Psoas muscle (tissue), 8 donors: ENCODE measurements at regions of chr15 and their contacts with region 1.

Region 1: DNA sequence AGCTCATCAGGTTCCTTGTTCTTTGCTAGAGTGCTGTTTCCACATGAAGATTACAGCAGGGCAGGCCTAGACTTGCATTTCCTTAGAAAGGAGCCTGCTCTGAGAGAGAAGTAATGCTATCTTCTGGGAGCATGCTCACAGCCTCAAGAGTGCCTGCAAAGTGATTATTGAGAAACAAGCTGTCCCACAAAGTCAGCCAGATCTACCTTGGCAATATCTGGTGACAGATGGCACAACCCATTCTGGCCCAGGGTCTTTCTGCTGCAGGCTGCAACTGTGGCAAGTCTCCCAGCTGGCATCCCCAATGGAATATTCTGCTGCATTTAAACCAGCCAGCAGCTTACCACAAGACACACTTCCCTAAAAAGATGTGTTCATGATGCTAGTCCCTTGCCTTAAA is 29.3 kb downstream of the MTMR10 start:
- DNase-seq: peak in 1 of 2 donors; percentile 75
- ATAC-seq: peak; percentile 80 to 84 (median 81)
- H3K4me3 ChIP-seq: no peak overlapping the region
- H3K27ac ChIP-seq: peak overlapping the region; percentile 94
- H3K4me1 ChIP-seq: peaks cover 24% of the 10 kb centered on the region
- H3K27me3 ChIP-seq: no peaks in the 10 kb centered on the region
- CTCF ChIP-seq: no peak

Region 2: GRCh38 chr15:30903497-30904201 is 58.4 kb before region 1 on chr15 and contains the start of gene FAN1:
- intact Hi-C with region 1: loop called in 1 of 2 experiments (anchors 5 kb)
- DNase-seq: peak; percentile 79 to 92
- ATAC-seq: peak; percentile 98 to 99 (median 98)
- H3K4me3 ChIP-seq: peak within 1 kb of the TSS; percentile 86
- H3K27ac ChIP-seq: peak within 1 kb of the TSS; percentile 89
- H3K4me1 ChIP-seq: peaks cover 27% of the 10 kb centered on the region
- H3K27me3 ChIP-seq: no peaks in the 10 kb centered on the region
- CTCF ChIP-seq: no peak
- total RNA-seq, gene FAN1: 13.5 to 27.5 (median 25.2) TPM

Region 3: DNA sequence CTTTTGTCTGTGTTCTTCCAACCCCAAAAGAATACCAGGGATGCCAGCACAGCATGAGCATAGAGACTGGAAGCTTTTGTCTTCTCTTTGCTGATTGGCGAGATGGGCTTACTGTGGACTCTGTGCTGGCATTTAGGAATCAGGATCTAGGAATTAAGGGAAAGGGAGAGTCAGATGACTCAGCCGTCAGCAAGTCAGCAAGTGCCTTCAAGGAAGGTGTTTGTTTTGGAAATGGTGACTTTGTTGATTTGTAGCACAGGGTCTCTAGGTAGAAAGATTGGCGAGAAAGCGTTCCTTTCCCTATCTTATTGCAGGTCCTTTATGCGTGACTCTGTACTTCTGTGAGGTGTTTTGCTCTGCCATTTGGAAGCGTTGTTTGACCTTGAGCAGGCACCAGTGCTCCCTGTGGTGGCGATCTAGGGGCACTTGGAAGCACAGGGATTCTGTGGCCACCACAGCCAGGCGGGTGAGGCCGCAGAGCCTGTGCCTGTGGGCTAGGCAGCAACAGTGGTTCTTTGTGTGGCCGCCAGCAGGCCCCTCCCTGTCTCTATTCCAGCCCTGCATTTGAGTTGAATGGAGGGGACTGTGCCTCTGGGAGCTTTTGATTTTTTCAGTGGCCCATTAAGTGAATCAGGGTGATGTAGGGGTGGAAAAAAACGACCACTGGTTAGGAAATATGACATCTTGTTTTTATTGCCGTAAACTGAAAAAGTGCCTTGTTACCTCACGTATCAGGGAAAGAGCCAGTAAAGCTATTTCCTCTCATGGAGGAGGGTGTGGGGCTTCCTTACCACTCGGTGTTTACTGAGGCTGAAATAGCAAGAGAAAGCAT is 39.4 kb before region 1 on chr15:
- intact Hi-C with region 1: loop called in 1 of 2 experiments (anchors 5 kb)
- DNase-seq: no peak
- ATAC-seq: peak; percentile 30 to 43 (median 36)
- H3K4me3 ChIP-seq: no peak overlapping the region
- H3K27ac ChIP-seq: peak overlapping the region; percentile 72
- H3K4me1 ChIP-seq: peaks cover 50% of the 10 kb centered on the region
- H3K27me3 ChIP-seq: no peaks in the 10 kb centered on the region
- CTCF ChIP-seq: no peak

Region 4: GRCh38 chr15:31344823-31345605 is 382.9 kb after region 1 on chr15:
- intact Hi-C with region 1: loop called in 1 of 2 experiments (anchors 10 kb)
- DNase-seq: peak; percentile 50 to 87
- ATAC-seq: peak; percentile 46 to 72 (median 66)
- H3K4me3 ChIP-seq: peak overlapping the region; percentile 44
- H3K27ac ChIP-seq: peak overlapping the region; percentile 78
- H3K4me1 ChIP-seq: peaks cover 85% of the 10 kb centered on the region
- H3K27me3 ChIP-seq: no peaks in the 10 kb centered on the region
- CTCF ChIP-seq: no peak